ENCODE measurements at regions of chr15 and their contacts with region 1.

Region 1: GRCh38 chr15:58980351-58980939 is 7.0 kb upstream of the RNF111 start:
- DNase-seq: no peak
- H3K4me3 Mint-ChIP-seq: no peak overlapping the region
- H3K27ac Mint-ChIP-seq: no peak overlapping the region
- H3K4me1 Mint-ChIP-seq: peaks cover 33% of the 10 kb centered on the region
- H3K27me3 Mint-ChIP-seq: peaks cover 15% of the 10 kb centered on the region

Region 2: GRCh38 chr15:58002338-58003126 is 977.9 kb before region 1 on chr15:
- intact Hi-C with region 1: no loop called
- DNase-seq: no peak
- H3K4me3 Mint-ChIP-seq: no peak overlapping the region
- H3K27ac Mint-ChIP-seq: no peak overlapping the region
- H3K4me1 Mint-ChIP-seq: no peaks in the 10 kb centered on the region
- H3K27me3 Mint-ChIP-seq: peaks cover 29% of the 10 kb centered on the region

Region 3: GRCh38 chr15:58704155-58704865 is 276.1 kb before region 1 on chr15:
- intact Hi-C with region 1: no loop called
- DNase-seq: no peak
- H3K4me3 Mint-ChIP-seq: no peak overlapping the region
- H3K27ac Mint-ChIP-seq: no peak overlapping the region
- H3K4me1 Mint-ChIP-seq: peaks cover 43% of the 10 kb centered on the region
- H3K27me3 Mint-ChIP-seq: no peaks in the 10 kb centered on the region

Region 4: GRCh38 chr15:58933281-58934113 is 46.9 kb before region 1 on chr15 and contains the start of gene SLTM:
- intact Hi-C with region 1: loop called (anchors 2 kb)
- DNase-seq: peak; percentile 96
- H3K4me3 Mint-ChIP-seq: peak within 1 kb of the TSS; percentile 98
- H3K27ac Mint-ChIP-seq: peak within 1 kb of the TSS; percentile 100
- H3K4me1 Mint-ChIP-seq: peaks cover 21% of the 10 kb centered on the region
- H3K27me3 Mint-ChIP-seq: peaks cover 1% of the 10 kb centered on the region
- total RNA-seq, gene SLTM: 126 and 127 TPM in 2 replicates

Region 5: DNA sequence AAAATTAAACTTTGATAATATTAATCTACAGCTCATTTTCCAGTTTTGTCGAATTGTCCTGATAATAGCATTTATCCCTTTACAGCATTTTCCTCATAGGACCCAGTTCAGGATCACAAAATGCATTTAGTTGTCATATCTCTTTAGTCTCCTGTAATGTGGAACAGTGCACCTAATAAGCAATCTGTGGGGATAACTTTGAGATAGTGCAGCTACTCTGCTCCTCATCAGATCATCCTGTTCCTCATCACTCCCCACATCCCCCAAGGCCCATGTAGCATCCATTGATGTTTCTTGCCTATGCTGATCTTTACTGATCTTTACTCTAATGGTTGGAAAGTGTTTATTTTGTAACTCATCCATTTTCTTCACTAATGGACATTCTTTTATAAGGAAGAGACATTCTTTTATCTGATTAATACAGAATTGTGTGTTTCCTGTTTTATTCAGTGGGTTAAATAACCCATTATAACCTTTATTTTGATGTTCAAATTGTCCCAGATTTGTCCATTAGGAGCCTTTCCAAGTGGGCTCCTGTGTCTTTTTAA is 14.5 kb after region 1 on chr15:
- intact Hi-C with region 1: no loop called
- DNase-seq: no peak
- H3K4me3 Mint-ChIP-seq: no peak overlapping the region
- H3K27ac Mint-ChIP-seq: no peak overlapping the region
- H3K4me1 Mint-ChIP-seq: peaks cover 28% of the 10 kb centered on the region
- H3K27me3 Mint-ChIP-seq: no peaks in the 10 kb centered on the region

Region 6: GRCh38 chr15:59074607-59075006 is 94.2 kb after region 1 on chr15:
- intact Hi-C with region 1: loop called (anchors 1 kb)
- DNase-seq: peak; percentile 63
- H3K4me3 Mint-ChIP-seq: peak overlapping the region; percentile 18
- H3K27ac Mint-ChIP-seq: peak overlapping the region; percentile 80
- H3K4me1 Mint-ChIP-seq: peaks cover 11% of the 10 kb centered on the region
- H3K27me3 Mint-ChIP-seq: no peaks in the 10 kb centered on the region

Region 7: DNA sequence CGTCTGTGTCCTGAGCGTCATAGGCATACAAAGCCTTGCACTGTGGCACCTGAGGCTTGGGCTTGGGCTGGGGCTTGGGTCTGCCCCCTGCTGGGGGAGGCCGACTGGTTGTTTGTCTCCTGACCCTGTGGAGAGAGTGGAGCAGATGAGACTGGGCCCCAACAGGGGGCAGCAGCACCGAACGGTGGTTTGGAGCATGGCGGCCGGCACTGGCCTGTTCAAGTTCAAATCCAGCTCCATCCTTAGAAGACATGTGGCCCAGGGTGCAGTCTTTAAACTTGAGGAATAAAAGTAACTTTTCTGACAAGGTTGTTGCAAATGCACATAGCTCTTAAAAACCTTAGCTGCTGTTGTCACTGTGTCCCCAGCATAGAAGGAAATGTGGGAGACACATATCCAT is 157.8 kb after region 1 on chr15:
- intact Hi-C with region 1: loop called (anchors 5 kb)
- DNase-seq: peak; percentile 84
- H3K4me3 Mint-ChIP-seq: peak overlapping the region; percentile 8
- H3K27ac Mint-ChIP-seq: peak overlapping the region; percentile 73
- H3K4me1 Mint-ChIP-seq: peaks cover 42% of the 10 kb centered on the region
- H3K27me3 Mint-ChIP-seq: no peaks in the 10 kb centered on the region

Region 8: GRCh38 chr15:59492389-59493377 is 512.2 kb after region 1 on chr15:
- intact Hi-C with region 1: loop called (anchors 1 kb)
- DNase-seq: peak; percentile 85
- H3K4me3 Mint-ChIP-seq: no peak overlapping the region
- H3K27ac Mint-ChIP-seq: no peak overlapping the region
- H3K4me1 Mint-ChIP-seq: peaks cover 2% of the 10 kb centered on the region
- H3K27me3 Mint-ChIP-seq: peaks cover 27% of the 10 kb centered on the region

Measured in activated CD4-positive, alpha-beta T cell treated with anti-CD3 and anti-CD28 coated beads, Interleukin-2, amount 10 ng/mL, durations not matched to agents 24 days and 14 days (primary cell).